Heart right ventricle (tissue), 16 donors: ENCODE measurements at regions of chr3 and their contacts with region 1.

Region 1: DNA sequence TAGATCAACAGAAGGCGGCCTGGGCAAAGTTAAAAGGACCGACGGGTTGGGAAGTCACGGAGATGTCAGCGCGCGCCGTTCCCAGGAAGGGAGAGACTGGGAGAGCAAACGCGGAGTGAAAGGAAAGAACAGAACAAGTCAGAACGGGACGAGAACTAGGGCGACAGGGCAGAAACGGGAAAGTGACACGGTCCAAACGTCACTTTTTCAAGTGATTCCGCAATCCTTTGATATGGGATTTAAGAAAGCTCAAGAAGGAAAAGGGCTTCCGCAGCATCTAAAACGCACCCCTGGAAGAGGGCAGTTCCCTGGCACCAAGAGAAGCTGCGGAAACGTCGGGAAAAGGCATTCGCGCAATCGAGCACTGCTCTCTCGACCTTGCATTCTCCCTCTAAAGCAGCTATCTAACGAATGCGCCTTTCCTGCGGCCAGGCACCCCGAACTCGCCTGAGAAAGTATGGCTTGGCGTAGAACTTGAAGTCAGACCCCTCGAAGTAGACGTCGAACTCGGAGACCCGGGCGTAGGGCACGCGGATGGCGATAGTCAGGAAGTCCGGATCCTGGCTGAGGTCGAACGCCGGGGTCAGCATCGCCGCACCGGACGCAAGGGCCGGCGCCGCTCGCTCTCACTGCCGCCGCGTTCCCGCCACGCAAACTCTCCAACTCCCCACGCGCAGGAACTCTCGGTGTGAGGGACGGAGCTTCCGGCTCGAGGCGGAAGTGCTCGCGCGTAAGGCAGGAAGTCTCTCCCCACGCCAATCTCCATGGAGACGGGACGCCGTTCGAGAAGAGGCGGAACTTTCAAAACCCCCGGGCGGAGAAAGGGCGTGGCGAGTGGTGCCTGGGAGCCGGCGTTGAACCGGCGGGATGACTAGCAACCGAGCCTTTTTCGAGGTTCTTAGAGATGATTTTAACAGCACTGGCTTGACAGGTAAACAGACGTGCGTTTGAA is at the start of gene SHQ1:
- DNase-seq: peak; percentile 96 to 97
- ATAC-seq: peak; percentile 97 to 99 (median 99)
- H3K4me3 ChIP-seq: peak within 1 kb of the TSS; percentile 51 to 97 (median 80)
- H3K27ac ChIP-seq: peak within 1 kb of the TSS in 9 of 10 donors; percentile 74 to 89 (median 81)
- H3K4me1 ChIP-seq: peaks cover 7 to 45% (median 24%) of the 10 kb centered on the region in 9 donors
- H3K27me3 ChIP-seq: no peaks in the 10 kb centered on the region
- CTCF ChIP-seq: no peak
- total RNA-seq, gene SHQ1: 13.9 to 24.0 (median 19.7) TPM

Region 2: GRCh38 chr3:71725279-71725991 is 1122.6 kb before region 1 on chr3 and contains the start of gene EIF4E3:
- intact Hi-C with region 1: loop called in 2 of 10 experiments (anchors 10 kb)
- DNase-seq: peak in 1 of 2 donors; percentile 46
- ATAC-seq: peak; percentile 40 to 78 (median 64)
- H3K4me3 ChIP-seq: peak within 1 kb of the TSS; percentile 54 to 97 (median 80)
- H3K27ac ChIP-seq: peak within 1 kb of the TSS in 9 of 10 donors; percentile 70 to 92 (median 76)
- H3K4me1 ChIP-seq: peaks cover 3 to 66% (median 19%) of the 10 kb centered on the region in 9 donors
- H3K27me3 ChIP-seq: no peaks in the 10 kb centered on the region
- CTCF ChIP-seq: no peak
- total RNA-seq, gene EIF4E3: 44.8 to 58.1 (median 53.0) TPM

Region 3: GRCh38 chr3:72738752-72739530 is 109.1 kb before region 1 on chr3:
- intact Hi-C with region 1: no loop called
- DNase-seq: peak in 1 of 2 donors; percentile 48
- ATAC-seq: peak; percentile 58 to 91 (median 79)
- H3K4me3 ChIP-seq: peak overlapping the region; percentile 17 to 55 (median 40)
- H3K27ac ChIP-seq: peak overlapping the region in 1 of 10 donors; percentile 32
- H3K4me1 ChIP-seq: peaks cover 0 to 15% (median 9%) of the 10 kb centered on the region in 9 donors
- H3K27me3 ChIP-seq: peaks cover 0 to 22% (median 9%) of the 10 kb centered on the region in 7 donors
- CTCF ChIP-seq: peak in 2 of 9 donors; percentile 16 to 18

Region 4: GRCh38 chr3:73037369-73037699 is 189.3 kb after region 1 on chr3:
- intact Hi-C with region 1: loop called in 1 of 10 experiments (anchors 10 kb)
- DNase-seq: no peak
- ATAC-seq: peak in 3 of 8 donors; percentile 43 to 48 (median 46)
- H3K4me3 ChIP-seq: no peak overlapping the region
- H3K27ac ChIP-seq: peak overlapping the region in 1 of 10 donors; percentile 50
- H3K4me1 ChIP-seq: peaks cover 0 to 97% (median 70%) of the 10 kb centered on the region in 9 donors
- H3K27me3 ChIP-seq: no peaks in the 10 kb centered on the region
- CTCF ChIP-seq: no peak

Region 5: DNA sequence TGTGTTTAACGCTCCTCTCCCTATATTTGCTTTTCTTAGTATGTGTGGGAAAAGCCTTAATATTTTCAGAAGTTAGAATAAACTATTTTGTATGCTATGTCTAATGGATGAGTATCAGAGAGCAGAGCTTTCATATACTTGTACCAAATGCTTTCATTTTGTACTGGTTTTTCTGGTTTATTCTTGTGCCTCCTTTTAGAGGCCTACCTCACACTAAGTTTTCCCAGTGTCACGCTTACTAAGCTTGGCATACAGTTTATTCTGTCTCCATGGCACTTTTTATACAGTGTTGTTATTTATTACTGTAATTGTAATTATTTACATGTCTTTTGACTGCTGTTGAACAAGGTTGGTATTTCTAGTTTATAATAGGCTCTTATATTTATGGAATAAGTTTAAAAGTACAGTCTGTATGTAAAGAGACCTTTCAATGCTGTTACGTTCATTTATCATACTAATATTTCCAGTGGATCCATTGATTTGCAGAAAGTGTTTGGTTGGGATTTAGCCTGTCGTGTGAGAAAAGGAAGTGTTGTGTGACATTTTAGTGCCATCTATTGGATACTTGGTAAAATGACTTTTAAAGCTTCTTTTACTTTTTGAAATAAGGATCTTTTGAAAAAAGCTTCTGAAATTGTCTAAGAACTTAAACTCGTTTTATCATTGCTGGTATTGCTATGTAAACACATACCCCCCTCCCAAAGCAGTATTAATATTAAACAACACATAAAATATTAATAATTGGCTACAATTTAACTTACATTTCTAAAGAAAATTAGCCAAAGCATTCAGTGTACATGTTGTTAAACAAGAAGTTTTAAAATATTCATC is 208.2 kb after region 1 on chr3:
- intact Hi-C with region 1: loop called in 6 of 10 experiments (anchors 5 to 10 kb)
- DNase-seq: no peak
- ATAC-seq: peak in 4 of 8 donors; percentile 55 to 82 (median 58)
- H3K4me3 ChIP-seq: no peak overlapping the region
- H3K27ac ChIP-seq: peak overlapping the region in 3 of 10 donors; percentile 23 to 33 (median 26)
- H3K4me1 ChIP-seq: peaks cover 0 to 43% (median 17%) of the 10 kb centered on the region in 9 donors
- H3K27me3 ChIP-seq: no peaks in the 10 kb centered on the region
- CTCF ChIP-seq: peak; percentile 29 to 70 (median 55)